ENCODE measurements at regions of chr3 and their contacts with region 1.

Region 1: DNA sequence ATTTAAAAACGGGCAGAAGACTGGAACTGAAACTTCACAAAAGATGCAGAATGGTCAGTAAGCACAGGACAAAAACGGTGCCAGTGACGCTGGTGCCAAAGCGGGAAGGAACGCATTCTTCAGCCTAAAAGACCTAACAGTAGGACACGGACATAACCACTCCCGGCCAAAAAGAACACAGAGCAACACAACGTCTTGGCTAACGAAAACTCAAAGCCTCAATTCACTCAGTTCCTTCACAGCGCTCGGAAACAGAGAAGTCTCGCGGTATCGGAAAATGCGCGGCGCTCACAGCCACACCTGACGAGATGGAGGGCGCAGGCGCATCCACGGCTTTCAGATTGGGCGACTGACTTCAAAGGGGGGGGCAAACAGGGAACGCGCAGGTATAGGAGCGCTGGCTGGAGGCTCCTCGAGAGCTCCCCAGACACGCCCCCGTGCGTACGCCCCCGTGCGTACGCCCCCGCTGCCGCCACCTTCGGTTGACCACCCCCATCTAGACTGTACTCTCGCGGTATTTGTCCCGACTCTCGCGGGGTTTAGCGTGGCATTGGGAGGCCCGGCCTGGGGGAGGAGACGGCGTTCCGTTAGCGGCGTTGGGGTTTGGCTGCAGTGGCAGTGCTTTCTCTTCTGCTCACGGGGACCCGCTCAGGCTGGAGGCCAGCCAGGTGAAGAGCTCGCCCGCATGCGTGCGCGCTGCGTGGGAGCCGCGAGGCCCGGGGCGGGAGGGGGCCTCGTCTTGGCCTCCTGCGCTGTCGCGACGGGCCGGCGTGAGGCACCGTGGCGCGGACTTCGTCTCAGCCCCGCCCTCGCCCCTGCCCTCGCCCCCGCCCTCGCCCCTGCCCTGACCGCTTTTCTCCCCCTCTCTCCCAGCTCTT is at the start of gene NKTR:
- DNase-seq: peak; percentile 97
- ATAC-seq: peak; percentile 91
- H3K4me3 ChIP-seq: peak within 1 kb of the TSS; percentile 78 to 85 (median 79)
- H3K27ac ChIP-seq: peak within 1 kb of the TSS; percentile 98
- H3K4me1 ChIP-seq: peaks cover 32% of the 10 kb centered on the region
- H3K27me3 ChIP-seq: no peaks in the 10 kb centered on the region; a peak in 1 of 5 replicates
- CTCF ChIP-seq: peak; percentile 47
- EP300 ChIP-seq: peak in 1 of 2 experiments; percentile 21; a peak in 2 of 4 replicates
- POLR2A ChIP-seq: peak; percentile 83 to 93
- RAD21 ChIP-seq: peak; percentile 55
- total RNA-seq, gene NKTR: 24.9 and 59.6 TPM in 2 replicates

Region 2: DNA sequence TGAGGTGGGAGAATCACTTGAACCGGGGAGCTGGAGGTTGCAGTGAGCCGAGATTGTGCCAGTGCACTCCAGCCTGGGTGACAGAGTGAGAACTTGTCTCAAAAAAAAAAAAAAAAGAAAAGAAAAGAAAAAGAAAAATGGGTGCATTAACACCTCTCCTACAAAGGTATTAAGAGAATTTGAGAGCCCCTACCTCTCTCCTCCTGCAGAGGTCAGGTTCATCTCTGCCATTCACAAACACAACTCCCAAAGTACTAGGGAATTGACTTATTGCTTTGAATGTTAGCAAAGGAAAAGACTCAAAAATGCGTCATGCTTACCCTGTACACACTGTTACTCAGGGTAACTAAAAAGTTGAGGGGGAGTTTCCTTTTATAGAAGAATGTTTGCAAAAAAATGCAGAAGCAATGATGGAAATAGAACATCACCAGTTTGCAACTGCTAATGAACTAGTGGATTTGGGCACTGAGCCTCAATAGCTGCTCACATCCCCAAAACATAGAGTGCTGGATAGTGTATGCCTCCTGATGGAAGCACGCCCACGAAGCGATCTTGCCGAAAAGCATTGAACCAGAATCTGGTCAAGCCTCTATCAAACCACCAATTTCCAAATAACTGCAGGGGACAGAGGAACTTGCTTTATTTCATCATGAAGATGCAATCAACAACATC is 174.5 kb before region 1 on chr3:
- CTCF ChIA-PET with region 1: no interaction called
- POLR2A ChIA-PET with region 1: no interaction called
- in situ Hi-C with region 1: no loop called
- intact Hi-C with region 1: no loop called
- DNase-seq: no peak
- ATAC-seq: no peak
- H3K4me3 ChIP-seq: no peak overlapping the region
- H3K27ac ChIP-seq: no peak overlapping the region
- H3K4me1 ChIP-seq: peaks cover 41% of the 10 kb centered on the region
- H3K27me3 ChIP-seq: no peaks in the 10 kb centered on the region; a peak in 1 of 5 replicates
- CTCF ChIP-seq: no peak
- EP300 ChIP-seq: no peak
- POLR2A ChIP-seq: no peak
- RAD21 ChIP-seq: no peak

Region 3: DNA sequence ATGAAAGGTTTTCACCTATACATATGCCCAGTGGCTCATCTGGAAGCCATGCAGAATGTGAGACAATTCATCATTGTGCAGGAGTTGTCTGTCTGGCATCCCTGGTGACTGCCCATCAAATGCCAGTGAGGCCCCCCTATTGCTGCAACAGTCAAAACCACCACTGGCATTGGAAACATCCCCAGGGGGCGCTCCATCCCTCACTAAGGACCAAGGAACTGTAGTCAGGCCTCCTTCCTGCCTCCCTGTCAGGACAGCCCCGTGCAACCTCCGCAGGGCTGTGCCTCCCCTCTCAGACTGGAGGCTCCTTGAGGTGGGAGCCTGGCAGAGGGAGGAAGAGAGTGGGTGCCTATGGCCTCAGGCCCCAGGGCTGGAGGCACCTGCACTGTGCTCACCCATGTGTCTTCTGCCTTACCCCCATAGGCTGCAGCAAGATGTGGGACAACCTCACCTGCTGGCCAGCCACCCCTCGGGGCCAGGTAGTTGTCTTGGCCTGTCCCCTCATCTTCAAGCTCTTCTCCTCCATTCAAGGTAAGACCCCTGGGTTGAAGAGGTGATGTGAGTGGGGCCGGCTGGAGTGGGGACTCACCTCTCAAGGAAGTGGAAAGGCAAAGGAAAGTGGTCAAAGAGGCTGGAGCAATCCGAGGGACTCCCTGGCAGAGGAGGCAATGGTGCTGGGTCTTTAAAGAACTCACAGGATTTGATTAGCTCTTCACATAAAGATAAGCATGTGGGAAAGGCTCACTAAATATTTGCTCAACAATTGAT is 81.4 kb before region 1 on chr3:
- CTCF ChIA-PET with region 1: no interaction called
- POLR2A ChIA-PET with region 1: no interaction called
- in situ Hi-C with region 1: no loop called
- intact Hi-C with region 1: no loop called
- DNase-seq: no peak
- ATAC-seq: no peak
- H3K4me3 ChIP-seq: no peak overlapping the region
- H3K27ac ChIP-seq: no peak overlapping the region
- H3K4me1 ChIP-seq: peaks cover 22% of the 10 kb centered on the region
- H3K27me3 ChIP-seq: no peaks in the 10 kb centered on the region; a peak in 1 of 5 replicates
- CTCF ChIP-seq: peak; percentile 44
- EP300 ChIP-seq: no peak
- POLR2A ChIP-seq: no peak
- RAD21 ChIP-seq: no peak

Region 4: GRCh38 chr3:42572278-42572677 is 28.1 kb before region 1 on chr3:
- CTCF ChIA-PET with region 1: no interaction called
- POLR2A ChIA-PET with region 1: interaction called, 8 read pairs
- in situ Hi-C with region 1: no loop called
- intact Hi-C with region 1: loop called (anchors 2 kb)
- DNase-seq: peak; percentile 62
- ATAC-seq: peak; percentile 100
- H3K4me3 ChIP-seq: no peak overlapping the region
- H3K27ac ChIP-seq: no peak overlapping the region
- H3K4me1 ChIP-seq: no peaks in the 10 kb centered on the region
- H3K27me3 ChIP-seq: no peaks in the 10 kb centered on the region
- CTCF ChIP-seq: peak; percentile 83
- EP300 ChIP-seq: no peak
- POLR2A ChIP-seq: no peak
- RAD21 ChIP-seq: peak; percentile 49; the same call in 1 of the 2 replicates

Region 5: DNA sequence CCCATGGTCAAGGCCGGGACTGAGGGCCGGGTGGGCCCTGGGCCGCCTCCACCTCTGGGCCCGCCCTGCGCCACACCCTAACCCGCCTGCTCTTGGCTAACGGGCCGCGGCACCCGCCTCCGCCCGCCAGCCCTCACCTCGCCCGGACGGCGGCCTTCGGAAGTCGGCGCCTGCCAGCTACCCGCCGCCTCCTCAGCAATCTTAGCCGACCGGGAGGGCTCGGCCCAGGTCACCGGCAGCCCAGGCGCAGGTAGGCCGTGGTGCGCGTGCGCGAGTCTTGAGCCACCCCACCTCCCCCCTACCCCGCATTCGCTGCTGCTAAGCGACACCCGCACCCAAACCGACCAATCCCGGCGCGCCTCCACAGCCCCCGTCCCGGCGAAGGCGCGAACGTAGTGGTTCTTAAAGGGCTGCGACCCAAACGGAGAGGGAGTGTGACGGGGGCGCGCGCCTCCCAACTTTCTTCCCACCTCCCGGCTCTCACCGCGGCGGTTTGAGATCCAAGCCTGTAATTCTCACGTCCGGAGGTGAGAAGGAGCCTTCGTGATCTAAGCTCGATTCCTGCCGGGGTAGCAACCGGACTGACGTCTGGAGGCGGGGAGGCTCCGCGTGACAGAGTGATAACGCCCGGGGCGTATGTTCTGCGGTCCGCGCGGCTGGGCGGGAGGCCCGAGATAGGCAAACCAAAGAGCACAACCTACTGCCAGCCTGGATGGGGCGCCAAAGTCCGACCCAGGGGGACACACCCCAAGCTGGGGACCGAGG is 18.5 kb before region 1 on chr3 and contains the start of gene SEC22C:
- CTCF ChIA-PET with region 1: no interaction called
- POLR2A ChIA-PET with region 1: interaction called, 26 read pairs
- in situ Hi-C with region 1: no loop called
- intact Hi-C with region 1: no loop called
- DNase-seq: peak; percentile 87
- ATAC-seq: peak; percentile 96
- H3K4me3 ChIP-seq: peak within 1 kb of the TSS; percentile 82 to 97 (median 93)
- H3K27ac ChIP-seq: peak within 1 kb of the TSS; percentile 74
- H3K4me1 ChIP-seq: peaks cover 33% of the 10 kb centered on the region
- H3K27me3 ChIP-seq: no peaks in the 10 kb centered on the region
- CTCF ChIP-seq: peak; percentile 80
- EP300 ChIP-seq: no peak
- POLR2A ChIP-seq: peak; percentile 72 to 80
- RAD21 ChIP-seq: peak; percentile 72
- total RNA-seq, gene SEC22C: 38.4 and 40.0 TPM in 2 replicates

Region 6: DNA sequence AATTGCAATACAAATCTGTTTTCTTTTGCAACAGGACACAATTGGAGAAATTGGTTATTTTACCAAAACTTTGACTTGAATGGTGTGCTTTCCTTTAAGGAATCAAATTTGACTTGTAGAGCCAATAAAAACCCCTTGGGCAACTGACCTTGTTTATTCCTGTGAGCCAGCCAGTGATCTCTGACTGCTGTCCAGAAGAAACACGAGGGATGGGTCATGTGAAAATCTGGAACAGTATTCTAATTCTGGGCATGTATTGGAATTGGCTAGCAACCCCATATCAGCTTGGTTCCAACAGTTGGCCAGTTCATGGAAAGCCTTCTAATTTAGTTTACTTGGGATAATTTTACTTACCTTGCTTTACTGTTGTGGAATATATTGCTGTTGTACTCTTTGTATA is 121.3 kb after region 1 on chr3:
- CTCF ChIA-PET with region 1: no interaction called
- POLR2A ChIA-PET with region 1: no interaction called
- in situ Hi-C with region 1: no loop called
- intact Hi-C with region 1: no loop called
- DNase-seq: no peak
- ATAC-seq: no peak
- H3K4me3 ChIP-seq: no peak overlapping the region
- H3K27ac ChIP-seq: no peak overlapping the region
- H3K4me1 ChIP-seq: no peaks in the 10 kb centered on the region
- H3K27me3 ChIP-seq: no peaks in the 10 kb centered on the region; a peak in 1 of 5 replicates
- CTCF ChIP-seq: no peak
- EP300 ChIP-seq: no peak
- POLR2A ChIP-seq: no peak
- RAD21 ChIP-seq: no peak

Region 7: GRCh38 chr3:42732829-42733459 is 132.6 kb after region 1 on chr3:
- CTCF ChIA-PET with region 1: no interaction called
- POLR2A ChIA-PET with region 1: interaction called, 6 read pairs
- in situ Hi-C with region 1: no loop called
- intact Hi-C with region 1: loop called (anchors 5 kb)
- DNase-seq: peak; percentile 81
- ATAC-seq: peak; percentile 91
- H3K4me3 ChIP-seq: peak overlapping the region in 1 of 3 experiments; percentile 22; a peak in 2 of 6 replicates
- H3K27ac ChIP-seq: peak overlapping the region; percentile 97
- H3K4me1 ChIP-seq: peaks cover 64% of the 10 kb centered on the region
- H3K27me3 ChIP-seq: no peaks in the 10 kb centered on the region
- CTCF ChIP-seq: peak; percentile 77
- EP300 ChIP-seq: peak in 1 of 2 experiments; percentile 20; a peak in 1 of 4 replicates
- POLR2A ChIP-seq: no peak; a peak in 2 of 4 replicates
- RAD21 ChIP-seq: peak; percentile 71

Region 8: GRCh38 chr3:42749753-42750231 is 149.4 kb after region 1 on chr3:
- CTCF ChIA-PET with region 1: no interaction called
- POLR2A ChIA-PET with region 1: interaction called, 24 read pairs
- in situ Hi-C with region 1: no loop called
- intact Hi-C with region 1: no loop called
- DNase-seq: no peak
- ATAC-seq: peak; percentile 76
- H3K4me3 ChIP-seq: no peak overlapping the region; a peak in 1 of 6 replicates
- H3K27ac ChIP-seq: no peak overlapping the region
- H3K4me1 ChIP-seq: peaks cover 54% of the 10 kb centered on the region
- H3K27me3 ChIP-seq: no peaks in the 10 kb centered on the region
- CTCF ChIP-seq: peak; percentile 64
- EP300 ChIP-seq: no peak
- POLR2A ChIP-seq: no peak
- RAD21 ChIP-seq: peak; percentile 49

Region 9: GRCh38 chr3:42755681-42756578 is 155.6 kb after region 1 on chr3:
- CTCF ChIA-PET with region 1: no interaction called
- POLR2A ChIA-PET with region 1: interaction called, 24 read pairs
- in situ Hi-C with region 1: no loop called
- intact Hi-C with region 1: no loop called
- DNase-seq: peak; percentile 91
- ATAC-seq: peak; percentile 88
- H3K4me3 ChIP-seq: peak overlapping the region in 1 of 3 experiments; percentile 18; a peak in 1 of 6 replicates
- H3K27ac ChIP-seq: peak overlapping the region; percentile 87
- H3K4me1 ChIP-seq: peaks cover 29% of the 10 kb centered on the region
- H3K27me3 ChIP-seq: no peaks in the 10 kb centered on the region
- CTCF ChIP-seq: peak; percentile 77
- EP300 ChIP-seq: peak; percentile 80 to 92; a peak in 3 of 4 replicates
- POLR2A ChIP-seq: no peak
- RAD21 ChIP-seq: no peak; the same call in 1 of the 2 replicates

Measured in HepG2 (cell line).